Mammary epithelial cell (primary cell): ENCODE measurements at regions of chr5 and their contacts with region 1.

Region 1: GRCh38 chr5:97162045-97162444 is 19.6 kb upstream of the LIX1 start:
- DNase-seq: peak; percentile 65
- H3K4me3 ChIP-seq: no peak overlapping the region
- H3K27ac ChIP-seq: no peak overlapping the region
- H3K4me1 ChIP-seq: no peaks in the 10 kb centered on the region
- H3K27me3 ChIP-seq: no peaks in the 10 kb centered on the region
- CTCF ChIP-seq: peak; percentile 84 to 89

Region 2: DNA sequence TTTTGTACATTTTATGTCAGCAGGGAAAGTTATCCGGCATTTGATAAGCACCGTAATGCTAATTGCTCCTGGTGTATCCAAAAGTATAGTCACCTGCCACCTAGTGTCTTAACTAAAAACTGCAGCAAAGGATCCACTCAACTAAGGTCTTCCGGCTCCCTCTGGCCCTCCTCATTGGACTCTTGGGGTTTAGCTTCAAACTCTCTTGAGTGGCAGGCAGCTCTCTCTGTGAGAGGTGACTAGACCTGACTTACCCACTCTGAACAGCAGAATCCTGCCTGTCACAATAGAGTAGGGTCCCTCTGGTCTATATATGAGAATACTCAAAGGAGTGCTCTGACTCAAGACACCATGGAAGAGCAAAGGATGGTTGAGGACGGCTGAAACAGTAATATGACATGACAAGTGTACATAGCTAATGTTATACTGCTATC is 560.2 kb before region 1 on chr5:
- CTCF ChIA-PET with region 1: no interaction called
- dilution Hi-C with region 1: no loop called
- in situ Hi-C with region 1: loop called (anchors 25 kb)
- intact Hi-C with region 1: no loop called
- DNase-seq: peak; percentile 55
- H3K4me3 ChIP-seq: no peak overlapping the region
- H3K27ac ChIP-seq: no peak overlapping the region
- H3K4me1 ChIP-seq: no peaks in the 10 kb centered on the region
- H3K27me3 ChIP-seq: peaks cover 5% of the 10 kb centered on the region
- CTCF ChIP-seq: peak; percentile 77 to 87

Region 3: DNA sequence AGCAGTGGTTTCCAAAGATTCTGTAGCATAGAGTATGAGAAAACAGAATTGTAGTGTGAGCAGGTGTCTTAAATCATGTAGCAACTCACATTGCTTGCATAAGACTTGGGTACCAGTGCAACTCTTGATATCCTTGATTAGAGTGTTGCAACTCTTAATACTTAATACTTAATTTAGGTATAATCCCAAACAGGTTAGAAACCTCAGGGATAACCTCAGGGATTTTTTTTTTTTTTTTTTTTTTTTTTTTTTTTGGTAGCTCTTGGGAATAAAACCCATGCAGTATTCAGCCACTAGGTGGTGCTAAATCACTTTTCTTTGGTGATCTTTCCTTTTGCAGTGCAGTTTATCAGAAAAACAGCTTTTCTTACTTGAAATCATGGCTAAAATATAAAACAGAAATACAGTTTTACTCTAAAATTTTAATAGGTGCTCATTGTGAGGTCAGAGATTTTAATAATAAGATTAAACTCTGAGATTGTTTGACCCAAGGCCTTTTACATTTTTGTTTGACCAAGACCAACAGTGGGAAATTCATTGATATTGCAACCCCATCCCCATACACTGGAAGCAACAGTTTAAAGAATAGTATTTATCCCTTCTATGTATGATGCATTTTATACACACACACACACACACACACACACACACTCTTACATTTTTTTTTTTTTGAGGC is 409.6 kb before region 1 on chr5:
- CTCF ChIA-PET with region 1: interaction called, 21 read pairs
- dilution Hi-C with region 1: loop called (anchors 25 kb)
- in situ Hi-C with region 1: loop called in 1 of 2 experiments (anchors 10 kb)
- intact Hi-C with region 1: loop called (anchors 1 kb)
- DNase-seq: peak; percentile 12
- H3K4me3 ChIP-seq: no peak overlapping the region
- H3K27ac ChIP-seq: no peak overlapping the region
- H3K4me1 ChIP-seq: no peaks in the 10 kb centered on the region
- H3K27me3 ChIP-seq: no peaks in the 10 kb centered on the region
- CTCF ChIP-seq: peak; percentile 54 to 62

Region 4: GRCh38 chr5:96765043-96765442 is 397.0 kb before region 1 on chr5:
- CTCF ChIA-PET with region 1: no interaction called
- dilution Hi-C with region 1: loop called (anchors 25 kb)
- in situ Hi-C with region 1: no loop called
- intact Hi-C with region 1: loop called (anchors 5 kb)
- DNase-seq: no peak
- H3K4me3 ChIP-seq: no peak overlapping the region
- H3K27ac ChIP-seq: no peak overlapping the region
- H3K4me1 ChIP-seq: no peaks in the 10 kb centered on the region
- H3K27me3 ChIP-seq: no peaks in the 10 kb centered on the region
- CTCF ChIP-seq: no peak

Region 5: GRCh38 chr5:96807075-96807654 is 354.9 kb before region 1 on chr5:
- CTCF ChIA-PET with region 1: no interaction called
- dilution Hi-C with region 1: no loop called
- in situ Hi-C with region 1: no loop called
- intact Hi-C with region 1: no loop called
- DNase-seq: peak; percentile 67
- H3K4me3 ChIP-seq: peak overlapping the region; percentile 72 to 92 (median 78)
- H3K27ac ChIP-seq: peak overlapping the region; percentile 91
- H3K4me1 ChIP-seq: peaks cover 23% of the 10 kb centered on the region
- H3K27me3 ChIP-seq: no peaks in the 10 kb centered on the region
- CTCF ChIP-seq: no peak

Region 6: GRCh38 chr5:96868603-96869371 is 293.3 kb before region 1 on chr5:
- CTCF ChIA-PET with region 1: interaction called, 3 read pairs
- dilution Hi-C with region 1: no loop called
- in situ Hi-C with region 1: loop called (anchors 5 to 10 kb)
- intact Hi-C with region 1: loop called (anchors 1 kb)
- DNase-seq: peak; percentile 57
- H3K4me3 ChIP-seq: no peak overlapping the region
- H3K27ac ChIP-seq: no peak overlapping the region
- H3K4me1 ChIP-seq: peaks cover 13% of the 10 kb centered on the region
- H3K27me3 ChIP-seq: no peaks in the 10 kb centered on the region
- CTCF ChIP-seq: peak; percentile 99

Region 7: GRCh38 chr5:96876292-96876850 is 285.7 kb before region 1 on chr5 and contains the start of gene ERAP2:
- CTCF ChIA-PET with region 1: interaction called, 3 read pairs
- dilution Hi-C with region 1: no loop called
- in situ Hi-C with region 1: loop called (anchors 5 to 10 kb)
- intact Hi-C with region 1: no loop called
- DNase-seq: peak; percentile 51
- H3K4me3 ChIP-seq: peak within 1 kb of the TSS; percentile 46 to 75 (median 74)
- H3K27ac ChIP-seq: peak within 1 kb of the TSS; percentile 78
- H3K4me1 ChIP-seq: peaks cover 17% of the 10 kb centered on the region
- H3K27me3 ChIP-seq: no peaks in the 10 kb centered on the region
- CTCF ChIP-seq: no peak
- total RNA-seq, gene ERAP2: 2.8 to 14.3 TPM

Region 8: DNA sequence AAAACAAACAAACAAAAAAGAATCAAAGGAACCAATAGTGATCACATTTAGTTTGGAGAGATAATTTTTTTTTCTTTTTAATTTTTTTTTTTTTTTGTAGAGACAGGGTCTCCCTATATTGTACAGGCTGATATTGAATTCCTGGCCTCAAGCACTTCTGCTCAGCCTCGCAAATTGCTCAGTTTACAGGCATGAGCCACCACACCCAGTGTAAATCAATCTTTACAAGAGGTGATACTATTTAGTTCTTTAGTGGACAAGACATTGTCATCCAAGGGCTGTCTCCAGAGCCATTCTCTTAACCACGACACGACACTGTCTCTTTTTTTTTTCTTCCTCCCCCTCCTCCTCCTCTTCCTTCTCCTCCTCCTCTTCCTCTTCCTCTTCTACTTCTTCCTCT is 256.2 kb before region 1 on chr5:
- CTCF ChIA-PET with region 1: interaction called, 10 read pairs
- dilution Hi-C with region 1: no loop called
- in situ Hi-C with region 1: no loop called
- intact Hi-C with region 1: no loop called
- DNase-seq: no peak
- H3K4me3 ChIP-seq: no peak overlapping the region
- H3K27ac ChIP-seq: no peak overlapping the region
- H3K4me1 ChIP-seq: no peaks in the 10 kb centered on the region
- H3K27me3 ChIP-seq: no peaks in the 10 kb centered on the region
- CTCF ChIP-seq: no peak